HAP-1 (cell line): ENCODE measurements at regions of chr5 and their contacts with region 1.

Region 1: GRCh38 chr5:79020861-79021561 is 35.9 kb upstream of the ARSB start:
- DNase-seq: peak; percentile 76 to 80
- H3K4me3 ChIP-seq: no peak overlapping the region
- H3K4me1 ChIP-seq: peaks cover 25% of the 10 kb centered on the region
- H3K27me3 ChIP-seq: peaks cover 46% of the 10 kb centered on the region

Region 2: GRCh38 chr5:79464695-79465332 is 443.8 kb after region 1 on chr5:
- in situ Hi-C with region 1: loop called (anchors 10 kb)
- DNase-seq: peak in 1 of 2 experiments; percentile 60
- H3K4me3 ChIP-seq: no peak overlapping the region
- H3K4me1 ChIP-seq: peaks cover 4% of the 10 kb centered on the region
- H3K27me3 ChIP-seq: no peaks in the 10 kb centered on the region

Region 3: DNA sequence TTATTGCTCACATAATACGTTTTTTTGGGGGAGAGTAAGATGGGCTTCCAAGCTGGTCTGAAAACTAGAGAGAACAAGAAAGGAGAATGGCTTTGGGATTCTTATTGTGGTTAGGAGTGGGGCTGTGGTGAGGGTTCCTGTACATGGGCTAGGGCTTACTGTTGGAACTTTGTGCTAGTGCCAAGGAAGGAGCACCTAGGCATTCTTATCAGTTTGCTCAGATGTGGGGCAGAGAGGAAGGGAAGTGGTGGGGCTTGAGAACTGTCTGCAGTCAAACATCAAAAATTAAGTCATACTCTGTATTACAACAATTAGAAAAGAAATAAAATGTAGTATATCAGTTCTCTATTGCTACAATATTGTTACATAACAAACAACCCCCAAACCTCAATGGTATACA is 1010.1 kb after region 1 on chr5:
- in situ Hi-C with region 1: no loop called
- DNase-seq: no peak
- H3K4me3 ChIP-seq: no peak overlapping the region
- H3K4me1 ChIP-seq: no peaks in the 10 kb centered on the region
- H3K27me3 ChIP-seq: peaks cover 13% of the 10 kb centered on the region

Region 4: GRCh38 chr5:80076112-80077050 is 1055.4 kb after region 1 on chr5:
- in situ Hi-C with region 1: loop called (anchors 5 kb)
- DNase-seq: no peak
- H3K4me3 ChIP-seq: no peak overlapping the region
- H3K4me1 ChIP-seq: no peaks in the 10 kb centered on the region
- H3K27me3 ChIP-seq: no peaks in the 10 kb centered on the region